Activated CD4-positive, alpha-beta memory T cell treated with anti-CD3 and anti-CD28 coated beads for 36 hours (primary cell): ENCODE measurements at regions of chr19 and their contacts with region 1.

Region 1: GRCh38 chr19:5790573-5791520 is at the start of gene DUS3L:
- DNase-seq: peak; percentile 98
- H3K4me3 Mint-ChIP-seq: peak within 1 kb of the TSS; percentile 100
- H3K27ac Mint-ChIP-seq: peak within 1 kb of the TSS; percentile 100
- H3K4me1 Mint-ChIP-seq: peaks cover 12% of the 10 kb centered on the region
- H3K27me3 Mint-ChIP-seq: no peaks in the 10 kb centered on the region
- total RNA-seq, gene DUS3L: 41.9 to 44.4 TPM

Region 2: GRCh38 chr19:4723367-4724187 is 1067.3 kb before region 1 on chr19 and contains the start of gene DPP9:
- CTCF ChIA-PET with region 1: no interaction called
- POLR2A ChIA-PET with region 1: no interaction called
- intact Hi-C with region 1: loop called (anchors 5 kb)
- DNase-seq: peak; percentile 98
- H3K4me3 Mint-ChIP-seq: peak within 1 kb of the TSS; percentile 84
- H3K27ac Mint-ChIP-seq: peak within 1 kb of the TSS; percentile 95
- H3K4me1 Mint-ChIP-seq: peaks cover 28% of the 10 kb centered on the region
- H3K27me3 Mint-ChIP-seq: peaks cover 5% of the 10 kb centered on the region
- total RNA-seq, gene DPP9: 54.8 to 57.5 TPM

Region 3: DNA sequence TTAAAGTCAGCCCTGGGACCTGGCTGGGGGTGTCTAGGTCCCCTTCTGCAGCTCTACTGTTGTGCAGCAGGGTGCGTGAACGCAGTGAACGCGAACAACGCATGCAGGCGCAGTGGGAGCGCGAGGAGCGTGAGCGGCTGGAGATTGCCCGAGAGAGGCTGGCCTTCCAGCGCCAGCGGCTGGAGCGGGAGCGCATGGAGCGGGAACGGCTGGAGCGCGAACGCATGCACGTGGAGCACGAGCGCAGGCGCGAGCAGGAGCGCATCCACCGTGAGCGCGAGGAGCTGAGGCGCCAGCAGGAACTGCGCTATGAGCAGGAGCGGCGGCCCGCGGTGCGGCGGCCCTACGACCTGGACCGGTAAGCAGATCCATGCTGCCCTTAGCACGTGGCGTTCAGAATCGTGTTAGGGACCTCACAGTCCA is 129.4 kb before region 1 on chr19:
- CTCF ChIA-PET with region 1: no interaction called
- POLR2A ChIA-PET with region 1: no interaction called
- intact Hi-C with region 1: no loop called
- DNase-seq: no peak
- H3K4me3 Mint-ChIP-seq: no peak overlapping the region
- H3K27ac Mint-ChIP-seq: no peak overlapping the region
- H3K4me1 Mint-ChIP-seq: peaks cover 6% of the 10 kb centered on the region
- H3K27me3 Mint-ChIP-seq: no peaks in the 10 kb centered on the region

Region 4: GRCh38 chr19:5680437-5681368 is 110.1 kb before region 1 on chr19 and contains the starts of genes HSD11B1L and MICOS13:
- CTCF ChIA-PET with region 1: no interaction called
- POLR2A ChIA-PET with region 1: no interaction called
- intact Hi-C with region 1: loop called (anchors 1 kb)
- DNase-seq: peak; percentile 99
- H3K4me3 Mint-ChIP-seq: peak within 1 kb of the TSS; percentile 96
- H3K27ac Mint-ChIP-seq: peak within 1 kb of the TSS; percentile 89
- H3K4me1 Mint-ChIP-seq: peaks cover 17% of the 10 kb centered on the region
- H3K27me3 Mint-ChIP-seq: no peaks in the 10 kb centered on the region
- total RNA-seq, gene HSD11B1L: 3.8 to 4.1 TPM
- total RNA-seq, gene MICOS13: 50.9 to 55.3 TPM

Region 5: DNA sequence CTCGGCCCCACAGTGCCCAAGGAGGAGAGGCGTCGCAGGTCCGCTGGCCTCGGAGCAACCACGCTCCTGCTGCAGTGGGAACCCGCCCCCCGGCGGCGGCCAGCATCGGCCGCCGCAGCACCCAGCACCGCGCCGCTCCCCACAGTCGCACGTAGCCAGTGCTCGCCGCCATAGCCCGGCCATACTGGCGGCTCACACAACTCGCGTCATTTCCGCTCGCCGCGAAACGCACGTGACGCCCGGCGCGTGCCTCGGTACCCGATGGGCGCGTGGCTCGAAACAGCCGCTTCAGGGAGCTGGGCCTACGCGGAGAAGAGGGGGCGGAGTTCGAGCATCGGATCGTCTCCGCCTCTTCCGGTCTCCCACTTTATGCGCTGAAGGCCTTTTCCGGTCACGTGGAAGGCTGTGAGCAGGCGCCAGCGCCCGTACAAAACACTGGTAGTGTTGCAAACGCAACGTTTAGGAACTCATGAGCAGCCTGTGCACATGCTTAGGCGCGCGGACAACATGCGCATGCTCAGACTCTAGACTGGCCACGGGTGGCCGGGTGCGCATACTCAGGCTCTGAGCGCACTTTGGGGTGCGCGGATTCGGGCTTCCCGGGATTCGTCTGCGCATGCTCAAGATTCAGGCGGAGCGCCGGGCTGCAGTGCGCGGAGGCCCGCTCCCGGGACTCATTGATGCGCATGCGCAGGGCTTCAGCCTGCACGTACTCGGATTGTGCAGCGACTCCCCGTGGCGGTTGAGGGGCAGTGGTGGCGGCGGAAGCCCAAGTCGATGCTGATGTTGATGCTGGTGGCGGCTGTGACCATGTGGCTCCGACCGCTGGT is 70.7 kb before region 1 on chr19 and contains the starts of genes CATSPERD and LONP1:
- CTCF ChIA-PET with region 1: interaction called, 4 read pairs
- POLR2A ChIA-PET with region 1: interaction called, 6 read pairs
- intact Hi-C with region 1: loop called (anchors 1 kb)
- DNase-seq: peak; percentile 99
- H3K4me3 Mint-ChIP-seq: peak within 1 kb of the TSS; percentile 95
- H3K27ac Mint-ChIP-seq: peak within 1 kb of the TSS; percentile 99
- H3K4me1 Mint-ChIP-seq: peaks cover 30% of the 10 kb centered on the region
- H3K27me3 Mint-ChIP-seq: no peaks in the 10 kb centered on the region
- total RNA-seq, gene CATSPERD: not detected
- total RNA-seq, gene LONP1: 178 to 181 TPM

Region 6: DNA sequence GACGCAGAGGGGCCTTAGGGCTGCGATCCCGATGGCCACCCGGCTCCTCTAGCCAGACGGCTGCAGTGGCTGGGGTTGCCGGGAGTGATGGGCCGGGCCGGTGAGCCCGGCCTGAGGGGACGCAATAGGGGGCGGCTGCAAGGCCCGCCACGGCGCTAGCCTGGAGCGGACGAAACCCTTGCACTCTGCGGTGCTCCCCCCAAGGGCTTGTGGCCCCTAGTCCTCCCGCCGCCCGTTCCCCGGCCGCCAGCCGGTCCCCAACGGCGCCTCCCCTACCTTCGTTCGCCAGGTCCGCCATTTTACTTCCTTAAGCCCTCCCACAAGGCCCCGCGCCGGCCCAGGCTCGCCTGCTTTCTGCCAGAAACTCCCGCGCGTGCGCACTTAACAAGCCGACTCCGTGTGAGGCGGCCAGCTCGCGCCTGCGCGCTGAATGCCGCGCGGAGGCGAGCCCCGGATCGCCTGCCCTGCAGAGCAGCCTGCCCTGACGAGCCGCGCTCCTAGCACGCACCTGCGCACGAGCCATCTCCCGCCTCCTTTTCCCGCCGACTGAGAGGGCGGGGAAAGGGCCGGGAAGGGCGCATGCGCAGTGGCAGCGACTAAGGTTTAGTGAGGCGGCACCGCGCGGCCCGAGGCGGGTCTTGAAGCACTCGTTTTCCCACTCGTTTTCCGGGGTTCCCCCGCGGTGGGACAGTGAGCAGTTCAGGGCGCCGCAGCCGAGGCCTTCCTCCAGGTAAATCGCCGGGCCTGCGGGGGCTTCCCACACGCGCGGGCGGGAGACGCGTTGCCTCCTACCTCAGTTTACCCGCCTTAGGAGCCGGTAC is 187.1 kb after region 1 on chr19 and contains the start of gene RANBP3:
- CTCF ChIA-PET with region 1: no interaction called
- POLR2A ChIA-PET with region 1: no interaction called
- intact Hi-C with region 1: loop called (anchors 1 kb)
- DNase-seq: peak; percentile 99
- H3K4me3 Mint-ChIP-seq: peak within 1 kb of the TSS; percentile 98
- H3K27ac Mint-ChIP-seq: peak within 1 kb of the TSS; percentile 92
- H3K4me1 Mint-ChIP-seq: peaks cover 57% of the 10 kb centered on the region
- H3K27me3 Mint-ChIP-seq: no peaks in the 10 kb centered on the region
- total RNA-seq, gene RANBP3: 78.1 to 81.3 TPM